Ascending aorta (tissue), 2 donors: ENCODE measurements at regions of chr11 and their contacts with region 1.

Region 1: GRCh38 chr11:1889224-1890120 is 2.2 kb downstream of the PRR33 start:
- DNase-seq: no peak
- H3K4me3 ChIP-seq: no peak overlapping the region
- H3K27ac ChIP-seq: peak overlapping the region in 1 of 2 donors; percentile 12
- H3K4me1 ChIP-seq: no peaks in the 10 kb centered on the region
- H3K27me3 ChIP-seq: no peaks in the 10 kb centered on the region
- CTCF ChIP-seq: no peak

Region 2: GRCh38 chr11:1876361-1877063 is 13.0 kb before region 1 on chr11:
- intact Hi-C with region 1: no loop called
- DNase-seq: no peak
- H3K4me3 ChIP-seq: peak overlapping the region in 1 of 2 donors; percentile 20
- H3K27ac ChIP-seq: peak overlapping the region; percentile 87 to 91
- H3K4me1 ChIP-seq: peaks cover 14 to 48% of the 10 kb centered on the region in 2 donors
- H3K27me3 ChIP-seq: no peaks in the 10 kb centered on the region
- CTCF ChIP-seq: peak; percentile 20 to 64 (median 39)

Region 3: GRCh38 chr11:1943977-1944376 is 54.5 kb after region 1 on chr11:
- intact Hi-C with region 1: loop called (anchors 10 kb)
- DNase-seq: peak in 1 of 2 donors; percentile 52
- H3K4me3 ChIP-seq: no peak overlapping the region
- H3K27ac ChIP-seq: no peak overlapping the region
- H3K4me1 ChIP-seq: peaks cover 0 to 3% of the 10 kb centered on the region in 2 donors
- H3K27me3 ChIP-seq: no peaks in the 10 kb centered on the region
- CTCF ChIP-seq: no peak